MCF 10A (cell line): ENCODE measurements at regions of chr9 and their contacts with region 1.

Region 1: DNA sequence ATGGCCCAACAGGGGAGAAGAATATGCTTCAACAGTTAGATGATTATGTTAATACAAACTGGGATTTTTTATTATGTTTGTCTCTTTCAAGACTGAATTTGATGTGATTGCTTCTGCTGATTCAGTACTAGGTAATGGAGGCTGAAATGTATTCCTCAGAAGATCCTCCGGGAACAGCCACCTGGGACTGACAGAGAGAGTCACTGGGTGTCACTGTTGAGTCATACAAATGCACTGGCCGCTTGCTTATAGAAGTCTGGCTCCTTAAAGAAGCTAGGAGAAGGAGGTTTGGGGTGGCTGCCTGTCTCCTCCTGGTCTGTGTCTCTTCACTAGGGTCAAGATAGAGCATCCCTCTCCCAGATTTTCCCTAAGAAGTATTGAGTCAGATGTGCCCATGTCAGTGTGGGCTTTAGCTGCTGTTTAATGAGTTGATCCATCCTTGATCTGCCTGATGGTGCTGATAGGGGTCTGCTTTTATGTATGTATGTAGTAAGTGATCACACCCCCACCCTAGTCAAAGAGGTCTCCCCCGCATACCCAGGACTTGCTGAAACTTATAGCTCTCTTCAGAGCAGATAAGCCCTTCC is 773.4 kb downstream of the BRINP1 start:
- DNase-seq: peak; percentile 73
- H3K4me3 Mint-ChIP-seq: no peak overlapping the region
- H3K27ac Mint-ChIP-seq: no peak overlapping the region
- H3K4me1 Mint-ChIP-seq: peaks cover 11% of the 10 kb centered on the region
- H3K27me3 Mint-ChIP-seq: no peaks in the 10 kb centered on the region
- CTCF ChIP-seq: peak; percentile 57

Region 2: GRCh38 chr9:117952581-117952980 is 643.2 kb before region 1 on chr9:
- CTCF ChIA-PET with region 1: no interaction called
- POLR2A ChIA-PET with region 1: no interaction called
- intact Hi-C with region 1: no loop called
- DNase-seq: no peak
- H3K4me3 Mint-ChIP-seq: no peak overlapping the region
- H3K27ac Mint-ChIP-seq: no peak overlapping the region
- H3K4me1 Mint-ChIP-seq: no peaks in the 10 kb centered on the region
- H3K27me3 Mint-ChIP-seq: no peaks in the 10 kb centered on the region
- CTCF ChIP-seq: no peak

Region 3: GRCh38 chr9:118305331-118305730 is 290.5 kb before region 1 on chr9:
- CTCF ChIA-PET with region 1: no interaction called
- POLR2A ChIA-PET with region 1: no interaction called
- intact Hi-C with region 1: no loop called
- DNase-seq: peak; percentile 32
- H3K4me3 Mint-ChIP-seq: no peak overlapping the region
- H3K27ac Mint-ChIP-seq: no peak overlapping the region
- H3K4me1 Mint-ChIP-seq: peaks cover 17% of the 10 kb centered on the region
- H3K27me3 Mint-ChIP-seq: no peaks in the 10 kb centered on the region
- CTCF ChIP-seq: no peak

Region 4: GRCh38 chr9:118522093-118523028 is 73.5 kb before region 1 on chr9:
- CTCF ChIA-PET with region 1: no interaction called
- POLR2A ChIA-PET with region 1: no interaction called
- intact Hi-C with region 1: loop called (anchors 5 kb)
- DNase-seq: peak; percentile 73
- H3K4me3 Mint-ChIP-seq: no peak overlapping the region
- H3K27ac Mint-ChIP-seq: no peak overlapping the region
- H3K4me1 Mint-ChIP-seq: no peaks in the 10 kb centered on the region
- H3K27me3 Mint-ChIP-seq: no peaks in the 10 kb centered on the region
- CTCF ChIP-seq: peak; percentile 77

Region 5: DNA sequence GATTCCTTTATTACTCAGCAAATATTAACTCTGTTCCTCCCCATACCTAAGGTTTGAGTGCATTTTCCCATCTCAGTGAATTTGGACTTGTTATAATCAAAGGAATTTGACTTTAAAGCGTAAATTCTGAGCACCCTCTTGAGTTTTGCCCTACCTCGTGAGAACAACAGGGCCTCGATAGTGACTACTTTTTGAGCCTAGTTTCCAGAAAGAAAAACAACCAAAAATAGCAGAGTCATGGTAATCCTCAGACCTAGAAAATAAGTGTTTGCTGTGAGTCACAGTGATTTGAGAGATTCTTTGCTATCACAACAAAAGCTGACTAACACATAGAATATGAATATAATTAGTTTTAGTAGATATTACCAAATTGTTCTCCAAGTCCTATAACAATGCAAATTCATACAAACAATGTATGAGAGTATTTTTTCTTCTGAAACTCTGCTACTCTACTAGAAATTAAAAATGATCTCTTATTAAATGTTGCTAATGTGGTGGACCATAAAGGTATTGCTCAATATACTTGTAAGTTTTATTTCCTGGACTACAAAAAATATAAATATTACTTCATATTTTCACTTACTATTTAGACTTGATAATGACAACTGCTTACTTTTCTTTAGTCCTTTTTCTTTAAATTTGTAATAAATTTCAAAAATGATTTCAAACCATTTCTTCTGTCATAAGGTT is 13.7 kb after region 1 on chr9:
- CTCF ChIA-PET with region 1: interaction called, 25 read pairs
- POLR2A ChIA-PET with region 1: no interaction called
- intact Hi-C with region 1: no loop called
- DNase-seq: peak; percentile 70
- H3K4me3 Mint-ChIP-seq: no peak overlapping the region
- H3K27ac Mint-ChIP-seq: peak overlapping the region; percentile 86
- H3K4me1 Mint-ChIP-seq: peaks cover 13% of the 10 kb centered on the region
- H3K27me3 Mint-ChIP-seq: no peaks in the 10 kb centered on the region
- CTCF ChIP-seq: no peak

Region 6: DNA sequence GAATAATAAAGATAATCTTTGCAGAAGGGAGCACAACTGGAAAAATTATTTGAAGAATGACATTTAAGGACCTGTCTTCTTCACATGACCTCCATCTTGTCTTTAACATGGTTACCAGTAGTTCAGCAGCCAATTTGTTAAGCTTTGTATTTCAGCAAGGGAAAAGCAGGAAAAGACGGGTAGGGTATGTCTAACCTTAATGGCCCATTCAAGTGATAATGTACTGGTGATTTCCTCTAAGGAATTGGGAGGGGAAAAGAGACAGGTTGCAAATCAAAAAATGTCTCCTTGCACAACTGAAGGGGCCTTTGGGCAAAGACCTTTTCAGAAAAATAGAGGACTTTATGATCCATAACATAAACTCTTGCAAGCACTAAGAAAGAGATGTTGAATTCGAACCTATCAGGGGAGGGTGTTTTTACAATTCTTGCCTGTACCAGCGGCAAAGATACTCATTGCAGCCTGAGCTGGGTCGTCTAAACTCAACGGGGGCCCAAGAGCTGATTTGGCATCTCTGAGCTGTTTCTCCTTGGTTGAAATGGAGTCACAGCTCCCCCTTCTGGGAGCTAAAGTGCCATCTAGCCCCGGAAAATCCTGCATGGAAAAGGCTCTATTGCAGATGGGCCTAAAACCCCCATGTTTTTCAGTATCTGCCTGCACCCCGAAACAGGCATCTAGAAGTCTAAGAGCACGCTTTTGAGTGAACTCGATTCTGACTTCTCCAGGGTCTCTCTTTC is 769.6 kb after region 1 on chr9:
- CTCF ChIA-PET with region 1: interaction called, 6 read pairs
- POLR2A ChIA-PET with region 1: no interaction called
- intact Hi-C with region 1: loop called (anchors 1 kb)
- DNase-seq: peak; percentile 53
- H3K4me3 Mint-ChIP-seq: no peak overlapping the region
- H3K27ac Mint-ChIP-seq: no peak overlapping the region
- H3K4me1 Mint-ChIP-seq: no peaks in the 10 kb centered on the region
- H3K27me3 Mint-ChIP-seq: peaks cover 16% of the 10 kb centered on the region
- CTCF ChIP-seq: peak; percentile 57

Region 7: DNA sequence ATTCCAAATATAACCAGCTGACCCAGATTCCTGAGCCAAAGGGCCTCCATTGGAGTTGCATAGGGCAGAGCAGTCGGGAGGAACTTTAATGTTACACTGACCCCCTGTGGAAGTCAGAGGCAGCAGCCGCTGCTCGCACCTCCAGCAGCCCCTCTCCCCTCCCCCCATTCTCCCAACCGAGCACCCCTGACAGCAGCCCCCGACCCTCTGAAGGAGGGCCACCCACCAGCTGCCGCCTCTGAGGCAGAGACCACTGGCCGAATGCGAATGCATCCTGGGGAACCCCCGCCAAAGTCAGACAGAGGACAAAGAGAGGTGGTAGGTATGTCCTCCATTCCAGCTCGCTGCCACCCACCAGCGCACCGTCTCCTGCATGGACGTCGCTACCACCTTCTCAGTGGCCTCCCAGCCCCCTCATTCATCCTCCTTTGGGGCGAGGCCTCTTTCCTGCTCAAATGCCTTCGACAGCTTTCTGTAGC is 1753.2 kb after region 1 on chr9:
- CTCF ChIA-PET with region 1: interaction called, 4 read pairs
- POLR2A ChIA-PET with region 1: no interaction called
- intact Hi-C with region 1: loop called (anchors 5 kb)
- DNase-seq: peak; percentile 64
- H3K4me3 Mint-ChIP-seq: no peak overlapping the region
- H3K27ac Mint-ChIP-seq: no peak overlapping the region
- H3K4me1 Mint-ChIP-seq: peaks cover 5% of the 10 kb centered on the region
- H3K27me3 Mint-ChIP-seq: no peaks in the 10 kb centered on the region
- CTCF ChIP-seq: peak; percentile 87